Activated CD8-positive, alpha-beta T cell treated with anti-CD3 and anti-CD28 coated beads for 36 hours (primary cell): ENCODE measurements at regions of chr9 and their contacts with region 1.

Region 1: GRCh38 chr9:95875305-95876137 is at the start of gene ERCC6L2:
- DNase-seq: peak; percentile 97
- ATAC-seq: peak; percentile 90
- H3K4me3 Mint-ChIP-seq: no peak within 1 kb of the TSS
- H3K27ac Mint-ChIP-seq: no peak within 1 kb of the TSS
- H3K4me1 Mint-ChIP-seq: peaks cover 38% of the 10 kb centered on the region
- H3K27me3 Mint-ChIP-seq: no peaks in the 10 kb centered on the region
- CTCF ChIP-seq: no peak
- total RNA-seq, gene ERCC6L2: 31.2 to 34.7 TPM

Region 2: GRCh38 chr9:95181226-95181818 is 694.2 kb before region 1 on chr9:
- CTCF ChIA-PET with region 1: no interaction called
- POLR2A ChIA-PET with region 1: no interaction called
- intact Hi-C with region 1: no loop called
- DNase-seq: no peak
- ATAC-seq: no peak
- H3K4me3 Mint-ChIP-seq: no peak overlapping the region
- H3K27ac Mint-ChIP-seq: no peak overlapping the region
- H3K4me1 Mint-ChIP-seq: no peaks in the 10 kb centered on the region
- H3K27me3 Mint-ChIP-seq: no peaks in the 10 kb centered on the region
- CTCF ChIP-seq: peak; percentile 60

Region 3: DNA sequence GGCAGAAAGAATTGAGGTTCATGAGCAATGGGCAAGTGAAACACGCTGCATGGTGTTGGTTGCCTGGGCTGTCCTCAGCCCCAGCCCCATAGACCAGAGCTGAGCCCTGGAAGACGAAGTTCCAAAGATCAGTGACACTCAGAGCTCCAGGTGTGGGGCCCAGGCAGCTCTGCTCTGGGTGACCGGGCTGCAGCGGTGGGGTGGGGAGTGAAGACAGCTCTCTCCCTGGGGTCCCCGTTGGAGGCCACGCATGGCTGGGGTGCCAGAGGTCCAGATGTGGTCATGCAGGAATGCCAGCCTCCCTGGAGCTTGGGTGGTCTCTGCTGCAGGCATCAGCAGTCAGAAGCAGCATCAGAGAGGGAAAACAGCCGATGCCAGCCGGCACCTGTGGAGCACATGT is 165.1 kb before region 1 on chr9:
- CTCF ChIA-PET with region 1: no interaction called
- POLR2A ChIA-PET with region 1: no interaction called
- intact Hi-C with region 1: no loop called
- DNase-seq: no peak
- ATAC-seq: no peak
- H3K4me3 Mint-ChIP-seq: no peak overlapping the region
- H3K27ac Mint-ChIP-seq: no peak overlapping the region
- H3K4me1 Mint-ChIP-seq: no peaks in the 10 kb centered on the region
- H3K27me3 Mint-ChIP-seq: peaks cover 2% of the 10 kb centered on the region
- CTCF ChIP-seq: no peak

Region 4: GRCh38 chr9:95726756-95727155 is 148.8 kb before region 1 on chr9:
- CTCF ChIA-PET with region 1: no interaction called
- POLR2A ChIA-PET with region 1: interaction called, 3 read pairs
- intact Hi-C with region 1: loop called (anchors 10 kb)
- DNase-seq: no peak
- ATAC-seq: no peak
- H3K4me3 Mint-ChIP-seq: no peak overlapping the region
- H3K27ac Mint-ChIP-seq: no peak overlapping the region
- H3K4me1 Mint-ChIP-seq: peaks cover 44% of the 10 kb centered on the region
- H3K27me3 Mint-ChIP-seq: peaks cover 9% of the 10 kb centered on the region
- CTCF ChIP-seq: peak; percentile 74

Region 5: DNA sequence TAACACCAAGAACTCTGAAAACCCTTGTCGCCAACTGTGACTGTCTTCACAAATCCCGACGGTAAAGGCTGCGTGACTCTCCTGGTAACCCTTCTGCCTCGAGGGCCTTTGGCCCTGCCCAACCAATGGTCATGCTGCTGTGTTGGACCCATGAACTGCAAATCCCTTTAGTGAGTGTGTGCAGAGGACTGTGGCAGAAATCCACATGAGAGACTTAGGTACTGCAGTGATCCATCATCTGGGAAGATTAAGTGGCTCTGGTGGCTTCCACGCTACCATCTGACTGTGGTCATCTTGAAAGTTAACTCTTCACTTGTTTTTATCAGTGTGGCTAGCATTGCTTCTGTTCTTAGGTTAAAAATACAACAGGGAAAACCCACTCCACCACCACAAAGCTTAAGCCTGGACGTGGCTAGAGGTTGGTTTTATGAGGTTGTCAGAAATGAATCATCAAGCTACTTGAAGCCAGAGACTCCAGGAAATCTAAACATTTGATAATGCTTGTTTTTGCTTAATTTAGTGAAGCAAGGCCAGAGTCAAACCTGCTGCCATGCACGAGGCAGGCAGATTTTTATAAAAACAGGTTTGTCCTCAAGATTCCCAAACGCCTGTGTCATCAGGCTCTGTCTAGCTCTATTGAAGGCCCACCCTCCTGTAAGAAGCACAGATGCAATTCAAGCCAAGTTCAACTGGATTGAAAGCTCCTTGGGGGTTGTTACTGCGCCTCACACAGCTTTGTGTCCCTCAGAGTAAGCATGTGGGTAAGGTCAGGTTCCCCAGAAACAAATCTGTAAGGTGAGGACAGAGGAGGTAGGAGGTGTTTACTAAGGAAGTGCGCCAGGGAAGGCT is 52.7 kb before region 1 on chr9:
- CTCF ChIA-PET with region 1: no interaction called
- POLR2A ChIA-PET with region 1: no interaction called
- intact Hi-C with region 1: no loop called
- DNase-seq: peak; percentile 80
- ATAC-seq: peak; percentile 80
- H3K4me3 Mint-ChIP-seq: no peak overlapping the region
- H3K27ac Mint-ChIP-seq: peak overlapping the region; percentile 45
- H3K4me1 Mint-ChIP-seq: peaks cover 22% of the 10 kb centered on the region
- H3K27me3 Mint-ChIP-seq: peaks cover 4% of the 10 kb centered on the region
- CTCF ChIP-seq: no peak

Region 6: GRCh38 chr9:95887926-95888497 is 12.5 kb after region 1 on chr9:
- CTCF ChIA-PET with region 1: interaction called, 3 read pairs
- POLR2A ChIA-PET with region 1: interaction called, 27 read pairs
- intact Hi-C with region 1: no loop called
- DNase-seq: no peak
- ATAC-seq: peak; percentile 37
- H3K4me3 Mint-ChIP-seq: peak overlapping the region; percentile 20
- H3K27ac Mint-ChIP-seq: peak overlapping the region; percentile 86
- H3K4me1 Mint-ChIP-seq: peaks cover 79% of the 10 kb centered on the region
- H3K27me3 Mint-ChIP-seq: no peaks in the 10 kb centered on the region
- CTCF ChIP-seq: no peak

Region 7: DNA sequence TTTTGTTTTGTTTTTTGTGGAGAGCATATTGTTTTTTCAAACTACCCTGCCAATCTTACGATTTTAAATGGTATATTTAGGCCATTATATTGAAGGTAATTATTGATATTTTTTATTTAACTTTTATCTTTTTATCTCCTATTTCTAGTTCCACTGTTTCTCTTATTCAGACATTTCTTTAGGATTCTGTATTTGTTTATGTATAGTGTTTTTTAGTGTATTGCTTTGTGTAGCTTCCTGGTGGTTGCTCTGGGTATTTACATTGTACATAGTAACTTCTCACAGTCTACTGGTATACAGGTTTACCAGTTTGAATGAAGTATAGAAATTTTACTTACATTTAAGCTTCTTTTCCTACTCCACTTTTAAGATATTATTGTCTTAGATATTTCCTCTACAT is 63.2 kb after region 1 on chr9:
- CTCF ChIA-PET with region 1: no interaction called
- POLR2A ChIA-PET with region 1: no interaction called
- intact Hi-C with region 1: no loop called
- DNase-seq: no peak
- ATAC-seq: no peak
- H3K4me3 Mint-ChIP-seq: no peak overlapping the region
- H3K27ac Mint-ChIP-seq: no peak overlapping the region
- H3K4me1 Mint-ChIP-seq: no peaks in the 10 kb centered on the region
- H3K27me3 Mint-ChIP-seq: no peaks in the 10 kb centered on the region
- CTCF ChIP-seq: no peak

Region 8: DNA sequence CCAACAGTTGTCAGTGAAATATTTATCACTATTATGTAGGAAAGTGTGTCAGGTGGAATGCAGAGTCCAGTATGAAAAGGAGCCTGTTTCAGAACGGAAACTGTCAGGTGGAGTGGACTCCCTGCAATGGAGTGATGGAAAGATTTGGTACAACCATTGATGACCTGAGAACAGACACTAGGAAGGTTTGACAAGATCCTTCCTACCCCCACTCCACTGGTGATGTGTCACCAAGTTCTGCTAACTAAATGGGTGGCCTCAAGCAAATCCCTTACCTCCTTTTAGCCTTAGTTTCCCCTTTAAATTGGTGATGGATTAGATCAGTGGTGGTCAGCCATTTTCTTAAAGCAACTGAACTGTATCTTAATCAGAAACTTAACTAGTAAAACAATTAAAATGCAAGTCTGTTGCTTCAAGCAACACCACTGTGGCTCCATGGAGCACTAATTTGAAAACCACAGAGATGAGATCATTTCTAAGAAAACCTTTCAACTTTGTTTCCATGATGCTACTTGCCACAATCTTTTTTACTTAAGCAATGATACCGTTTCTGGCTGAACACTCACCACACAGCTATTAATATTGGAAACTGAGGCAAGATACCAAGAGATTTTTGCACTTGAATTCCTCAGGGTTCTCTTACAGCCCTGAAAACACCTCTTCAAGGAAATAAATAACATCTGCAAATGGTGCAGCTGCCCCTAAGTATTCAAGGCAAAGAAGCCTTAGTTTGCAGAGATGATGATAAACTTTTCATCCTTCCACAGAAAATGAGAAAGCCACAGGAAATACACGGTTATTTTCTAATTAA is 140.6 kb after region 1 on chr9:
- CTCF ChIA-PET with region 1: no interaction called
- POLR2A ChIA-PET with region 1: interaction called, 5 read pairs
- intact Hi-C with region 1: loop called (anchors 5 kb)
- DNase-seq: peak; percentile 77
- ATAC-seq: peak; percentile 65
- H3K4me3 Mint-ChIP-seq: peak overlapping the region; percentile 31
- H3K27ac Mint-ChIP-seq: peak overlapping the region; percentile 100
- H3K4me1 Mint-ChIP-seq: peaks cover 69% of the 10 kb centered on the region
- H3K27me3 Mint-ChIP-seq: no peaks in the 10 kb centered on the region
- CTCF ChIP-seq: no peak